Gastrocnemius medialis (tissue), 4 donors: ENCODE measurements at regions of chr2 and their contacts with region 1.

Region 1: GRCh38 chr2:160406591-160407392 is 86.8 kb downstream of the RBMS1 start:
- DNase-seq: peak in 1 of 2 donors; percentile 36
- ATAC-seq: peak; percentile 47 to 50
- H3K4me3 ChIP-seq: peak overlapping the region; percentile 73 to 95 (median 85)
- H3K27ac ChIP-seq: peak overlapping the region; percentile 77 to 88 (median 84)
- H3K4me1 ChIP-seq: peaks cover 52 to 60% of the 10 kb centered on the region in 2 donors
- H3K27me3 ChIP-seq: no peaks in the 10 kb centered on the region
- CTCF ChIP-seq: no peak
- POLR2A ChIP-seq: peak; percentile 18 to 31

Region 2: GRCh38 chr2:160317181-160318099 is 89.4 kb before region 1 on chr2:
- in situ Hi-C with region 1: no loop called
- intact Hi-C with region 1: loop called (anchors 5 kb)
- DNase-seq: no peak
- ATAC-seq: no peak
- H3K4me3 ChIP-seq: no peak overlapping the region
- H3K27ac ChIP-seq: peak overlapping the region; percentile 4 to 81 (median 52)
- H3K4me1 ChIP-seq: peaks cover 54 to 65% of the 10 kb centered on the region in 2 donors
- H3K27me3 ChIP-seq: no peaks in the 10 kb centered on the region
- CTCF ChIP-seq: no peak
- POLR2A ChIP-seq: no peak

Region 3: GRCh38 chr2:160332318-160332717 is 74.5 kb before region 1 on chr2:
- in situ Hi-C with region 1: no loop called
- intact Hi-C with region 1: loop called (anchors 5 kb)
- DNase-seq: no peak
- ATAC-seq: no peak
- H3K4me3 ChIP-seq: no peak overlapping the region
- H3K27ac ChIP-seq: no peak overlapping the region
- H3K4me1 ChIP-seq: peaks cover 66 to 67% of the 10 kb centered on the region in 2 donors
- H3K27me3 ChIP-seq: no peaks in the 10 kb centered on the region
- CTCF ChIP-seq: no peak
- POLR2A ChIP-seq: no peak

Region 4: GRCh38 chr2:160387558-160388262 is 19.1 kb before region 1 on chr2:
- in situ Hi-C with region 1: no loop called
- intact Hi-C with region 1: loop called (anchors 2 kb)
- DNase-seq: peak; percentile 58 to 78
- ATAC-seq: peak; percentile 85 to 89
- H3K4me3 ChIP-seq: peak overlapping the region in 2 of 4 donors; percentile 14 to 26
- H3K27ac ChIP-seq: peak overlapping the region; percentile 68 to 76 (median 75)
- H3K4me1 ChIP-seq: peaks cover 48 to 63% of the 10 kb centered on the region in 2 donors
- H3K27me3 ChIP-seq: no peaks in the 10 kb centered on the region
- CTCF ChIP-seq: no peak
- POLR2A ChIP-seq: peak in 1 of 2 donors; percentile 8

Region 5: DNA sequence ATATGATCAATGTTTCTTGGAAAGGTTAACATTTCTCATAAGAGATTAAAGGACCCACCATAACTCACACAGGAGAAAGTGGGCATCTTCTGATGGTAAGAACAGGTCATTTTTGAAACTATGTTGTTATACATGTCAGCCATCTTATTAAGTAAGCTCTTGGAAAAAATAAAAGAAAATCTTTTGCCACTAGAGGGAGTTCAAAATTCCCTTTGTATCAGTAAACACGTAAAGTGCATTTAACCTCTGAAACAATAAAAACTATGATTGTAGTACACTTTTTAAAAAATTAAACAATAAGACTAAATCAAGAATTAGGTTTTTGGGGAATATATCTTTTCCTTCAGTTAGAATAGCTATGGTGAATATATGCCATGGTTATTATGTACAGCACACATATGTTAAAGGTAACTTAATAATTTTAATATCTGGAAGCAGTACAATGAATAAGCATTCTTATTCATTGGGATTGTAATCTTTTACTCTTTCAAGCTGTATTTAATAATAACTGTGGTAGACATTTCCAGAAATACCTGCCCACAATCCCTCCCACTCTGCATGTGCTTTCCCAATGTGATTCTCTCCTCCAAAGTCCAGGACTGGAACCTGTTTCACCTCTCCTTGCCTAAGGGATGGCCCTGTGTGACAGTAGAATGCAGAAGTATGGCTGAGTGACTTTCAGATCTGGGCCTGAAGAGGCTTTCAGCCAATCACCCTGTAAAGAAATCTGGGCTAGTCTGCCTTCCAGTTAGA is 22.6 kb after region 1 on chr2:
- in situ Hi-C with region 1: no loop called
- intact Hi-C with region 1: loop called (anchors 2 kb)
- DNase-seq: no peak
- ATAC-seq: peak in 1 of 2 donors; percentile 47
- H3K4me3 ChIP-seq: no peak overlapping the region
- H3K27ac ChIP-seq: peak overlapping the region; percentile 4 to 63 (median 49)
- H3K4me1 ChIP-seq: peaks cover 36 to 38% of the 10 kb centered on the region in 2 donors
- H3K27me3 ChIP-seq: no peaks in the 10 kb centered on the region
- CTCF ChIP-seq: peak in 4 of 5 experiments; percentile 38 to 65 (median 56)
- POLR2A ChIP-seq: no peak

Region 6: GRCh38 chr2:160454070-160454797 is 47.4 kb after region 1 on chr2:
- in situ Hi-C with region 1: no loop called
- intact Hi-C with region 1: no loop called
- DNase-seq: no peak
- ATAC-seq: no peak
- H3K4me3 ChIP-seq: no peak overlapping the region
- H3K27ac ChIP-seq: no peak overlapping the region
- H3K4me1 ChIP-seq: peaks cover 42 to 52% of the 10 kb centered on the region in 2 donors
- H3K27me3 ChIP-seq: no peaks in the 10 kb centered on the region
- CTCF ChIP-seq: no peak
- POLR2A ChIP-seq: no peak

Region 7: DNA sequence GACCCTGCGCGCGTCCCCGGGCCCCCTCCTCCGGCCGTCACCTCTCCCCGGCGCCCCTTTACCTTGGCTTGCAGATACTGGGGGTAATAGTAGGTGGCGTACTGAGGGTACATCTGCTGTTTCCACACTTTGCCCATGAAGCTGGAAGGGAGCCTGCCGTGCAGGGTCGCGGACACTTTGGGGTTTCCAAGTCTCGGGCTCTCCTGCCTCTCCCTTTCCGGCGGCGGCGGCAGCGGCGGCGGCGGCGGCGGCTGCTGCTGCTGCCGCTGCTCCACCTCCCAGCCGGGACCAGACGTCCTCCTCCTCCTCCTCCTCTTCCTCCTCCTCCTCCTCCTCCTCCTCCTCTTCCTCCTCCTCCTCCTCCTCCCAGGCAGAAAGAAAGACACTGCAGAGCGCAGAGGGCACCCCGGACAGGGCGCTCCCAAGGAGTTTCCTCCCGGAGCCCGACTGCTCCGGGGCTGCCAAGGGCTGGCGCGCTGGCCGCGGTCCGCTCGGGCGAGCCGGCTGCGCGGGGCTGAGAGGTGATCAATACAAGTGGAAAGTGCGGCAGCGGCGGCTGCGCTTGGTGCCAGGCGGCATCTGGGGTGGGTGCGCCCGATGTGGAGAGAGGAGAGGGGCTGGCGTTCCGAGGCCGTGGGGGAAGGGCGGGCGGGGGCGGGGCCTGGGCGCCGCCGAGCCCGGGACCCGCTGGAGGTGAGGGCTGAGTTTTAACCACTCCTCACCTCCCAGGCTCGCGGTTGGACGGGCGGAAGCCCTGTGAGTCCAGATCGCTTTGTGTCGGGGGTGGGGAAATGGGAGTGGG is 86.6 kb after region 1 on chr2 and contains the start of gene RBMS1:
- in situ Hi-C with region 1: no loop called
- intact Hi-C with region 1: loop called (anchors 5 kb)
- DNase-seq: peak; percentile 22 to 40
- ATAC-seq: peak; percentile 48 to 60
- H3K4me3 ChIP-seq: peak within 1 kb of the TSS; percentile 84 to 99 (median 98)
- H3K27ac ChIP-seq: peak within 1 kb of the TSS; percentile 87 to 97 (median 93)
- H3K4me1 ChIP-seq: peaks cover 18 to 20% of the 10 kb centered on the region in 2 donors
- H3K27me3 ChIP-seq: no peaks in the 10 kb centered on the region
- CTCF ChIP-seq: no peak
- POLR2A ChIP-seq: peak; percentile 3 to 5
- total RNA-seq, gene RBMS1: 13.0 to 24.5 (median 14.1) TPM